HEK293T (cell line): ENCODE measurements at regions of chr14 and their contacts with region 1.

Region 1: DNA sequence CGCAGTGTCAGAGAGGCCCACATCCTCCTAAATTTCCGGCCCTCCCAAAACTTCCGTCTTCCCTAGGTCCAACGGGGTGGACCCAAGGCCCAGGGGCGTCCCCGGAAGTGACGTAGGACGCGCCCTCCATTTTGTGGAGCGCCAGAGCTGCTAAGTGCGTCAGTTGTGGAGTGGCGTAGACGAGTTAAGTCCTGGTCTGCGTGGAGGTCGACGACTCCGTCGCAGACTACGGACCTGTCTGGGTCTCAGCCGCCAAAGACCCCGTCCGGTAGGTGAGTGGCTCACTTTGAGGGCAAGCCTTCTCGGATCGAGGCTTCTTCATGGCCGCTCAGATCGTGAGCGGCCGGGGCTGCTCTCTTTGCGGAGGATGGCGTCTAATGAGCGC is at the start of gene SRSF5:
- DNase-seq: peak; percentile 93

Region 2: GRCh38 chr14:69749956-69750355 is 17.0 kb before region 1 on chr14:
- CTCF ChIA-PET with region 1: no interaction called
- POLR2A ChIA-PET with region 1: interaction called, 13 read pairs
- DNase-seq: no peak

Region 3: GRCh38 chr14:69779088-69779487 is 12.1 kb after region 1 on chr14:
- CTCF ChIA-PET with region 1: no interaction called
- POLR2A ChIA-PET with region 1: interaction called, 23 read pairs
- DNase-seq: no peak

Region 4: GRCh38 chr14:69815169-69815955 is 48.4 kb after region 1 on chr14:
- CTCF ChIA-PET with region 1: no interaction called
- POLR2A ChIA-PET with region 1: no interaction called
- DNase-seq: no peak